PC-3 (cell line): ENCODE measurements at regions of chr12 and their contacts with region 1.

Region 1: DNA sequence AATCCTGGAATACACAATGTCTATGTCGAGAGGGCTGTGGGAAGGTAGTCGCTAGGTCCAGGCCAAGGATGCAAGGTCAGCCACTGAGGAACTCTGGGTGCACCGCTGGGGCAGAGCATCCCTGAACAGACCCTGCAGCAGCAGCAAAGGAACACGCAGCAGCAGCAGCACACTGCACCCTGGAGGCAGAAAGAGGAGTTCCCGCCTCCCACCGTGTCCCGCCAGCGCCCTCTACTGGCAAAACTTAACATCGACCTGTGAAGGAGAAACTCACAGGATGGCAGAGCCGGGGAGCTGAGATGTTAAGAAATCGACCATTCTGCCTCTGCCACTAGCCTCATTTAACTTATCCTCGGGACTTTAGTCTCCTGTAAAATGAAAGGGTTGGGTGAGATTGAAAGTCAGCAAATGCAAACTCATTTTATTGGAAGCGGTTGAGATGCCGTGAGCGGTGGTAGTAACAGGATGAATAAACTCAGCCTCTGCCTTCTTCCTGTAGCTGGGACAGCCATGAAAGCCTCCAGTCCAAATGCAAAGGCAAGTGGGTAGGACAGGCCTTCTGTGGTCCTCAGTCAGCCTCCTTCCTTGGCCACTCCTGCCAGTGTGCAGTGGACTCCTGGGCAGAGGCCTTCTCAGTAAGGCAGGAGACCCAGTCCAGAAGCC is 45.6 kb downstream of the STAB2 start:
- DNase-seq: peak; percentile 93
- ATAC-seq: peak; percentile 88
- H3K4me3 ChIP-seq: no peak overlapping the region
- H3K27ac ChIP-seq: no peak overlapping the region
- H3K4me1 ChIP-seq: peaks cover 3% of the 10 kb centered on the region; the same call in 1 of the 2 replicates
- H3K27me3 ChIP-seq: peaks cover 24% of the 10 kb centered on the region
- CTCF ChIP-seq: peak; percentile 100

Region 2: DNA sequence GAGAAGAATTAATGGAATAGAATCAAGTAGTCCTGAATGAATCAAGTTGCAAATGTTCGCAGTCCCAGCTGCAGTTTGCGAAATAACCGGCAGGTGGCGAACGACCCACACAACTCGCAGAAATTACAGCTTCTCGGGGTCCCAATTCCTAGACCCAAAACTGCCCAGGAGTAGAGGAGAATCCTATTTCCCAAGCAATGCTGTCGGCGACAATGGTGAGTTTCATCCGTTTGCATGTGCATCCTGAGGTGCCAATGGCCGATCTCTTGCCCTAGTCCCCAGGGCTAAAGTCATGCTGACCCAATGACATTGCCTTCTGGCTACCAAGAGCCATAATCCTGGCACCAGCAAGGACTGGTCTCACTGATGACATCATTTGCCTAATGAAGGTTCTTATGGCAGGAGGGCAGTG is 683.7 kb before region 1 on chr12:
- CTCF ChIA-PET with region 1: no interaction called
- POLR2A ChIA-PET with region 1: no interaction called
- intact Hi-C with region 1: loop called (anchors 5 kb)
- DNase-seq: peak; percentile 64
- ATAC-seq: no peak
- H3K4me3 ChIP-seq: no peak overlapping the region
- H3K27ac ChIP-seq: no peak overlapping the region
- H3K4me1 ChIP-seq: no peaks in the 10 kb centered on the region
- H3K27me3 ChIP-seq: peaks cover 22% of the 10 kb centered on the region
- CTCF ChIP-seq: peak; percentile 96

Region 3: GRCh38 chr12:103495479-103496456 is 136.9 kb before region 1 on chr12 and contains the start of gene C12orf42:
- CTCF ChIA-PET with region 1: interaction called, 3 read pairs
- POLR2A ChIA-PET with region 1: no interaction called
- intact Hi-C with region 1: loop called (anchors 1 kb)
- DNase-seq: peak; percentile 76
- ATAC-seq: peak; percentile 81
- H3K4me3 ChIP-seq: peak within 1 kb of the TSS; percentile 65
- H3K27ac ChIP-seq: no peak within 1 kb of the TSS
- H3K4me1 ChIP-seq: peaks cover 15% of the 10 kb centered on the region
- H3K27me3 ChIP-seq: peaks cover 29% of the 10 kb centered on the region
- CTCF ChIP-seq: peak; percentile 91
- total RNA-seq, gene C12orf42: not detected in 2 replicates

Region 4: DNA sequence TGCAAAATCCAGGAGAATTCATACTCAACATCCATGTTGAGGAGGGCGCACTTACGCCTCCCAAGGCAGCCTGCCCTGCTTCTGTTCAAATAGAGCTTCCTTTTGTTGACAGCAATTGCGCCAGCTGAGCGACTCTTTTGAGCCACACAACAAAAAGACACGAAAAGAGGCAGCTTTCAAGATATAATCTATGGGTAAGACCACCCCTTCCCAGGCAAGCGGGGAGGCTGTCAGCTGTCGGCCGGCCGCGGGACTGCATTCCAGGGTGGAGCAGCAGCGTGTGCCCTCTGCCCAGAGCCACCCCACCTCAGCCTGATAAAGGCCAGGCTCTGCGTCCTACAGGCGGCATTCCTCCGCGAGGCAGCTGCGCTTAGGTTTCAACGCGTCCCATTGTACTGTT is 61.4 kb before region 1 on chr12:
- CTCF ChIA-PET with region 1: interaction called, 5 read pairs
- POLR2A ChIA-PET with region 1: no interaction called
- intact Hi-C with region 1: loop called (anchors 1 kb)
- DNase-seq: no peak
- ATAC-seq: no peak
- H3K4me3 ChIP-seq: no peak overlapping the region
- H3K27ac ChIP-seq: no peak overlapping the region
- H3K4me1 ChIP-seq: peaks cover 5% of the 10 kb centered on the region; the same call in 1 of the 2 replicates
- H3K27me3 ChIP-seq: no peaks in the 10 kb centered on the region
- CTCF ChIP-seq: no peak

Region 5: GRCh38 chr12:103586132-103586531 is 46.6 kb before region 1 on chr12:
- CTCF ChIA-PET with region 1: interaction called, 3 read pairs
- POLR2A ChIA-PET with region 1: no interaction called
- intact Hi-C with region 1: loop called (anchors 1 kb)
- DNase-seq: peak; percentile 35
- ATAC-seq: peak; percentile 54
- H3K4me3 ChIP-seq: no peak overlapping the region
- H3K27ac ChIP-seq: no peak overlapping the region
- H3K4me1 ChIP-seq: no peaks in the 10 kb centered on the region
- H3K27me3 ChIP-seq: peaks cover 51% of the 10 kb centered on the region
- CTCF ChIP-seq: peak; percentile 44

Region 6: GRCh38 chr12:103877934-103878510 is 245.3 kb after region 1 on chr12:
- CTCF ChIA-PET with region 1: interaction called, 3 read pairs
- POLR2A ChIA-PET with region 1: no interaction called
- intact Hi-C with region 1: loop called (anchors 5 kb)
- DNase-seq: peak; percentile 94
- ATAC-seq: peak; percentile 73
- H3K4me3 ChIP-seq: 0 out of 2 replicates have a peak overlapping the region, but pooled peaks have one; percentile 25
- H3K27ac ChIP-seq: no peak overlapping the region
- H3K4me1 ChIP-seq: peaks cover 27% of the 10 kb centered on the region
- H3K27me3 ChIP-seq: no peaks in the 10 kb centered on the region
- CTCF ChIP-seq: peak; percentile 95

Region 7: DNA sequence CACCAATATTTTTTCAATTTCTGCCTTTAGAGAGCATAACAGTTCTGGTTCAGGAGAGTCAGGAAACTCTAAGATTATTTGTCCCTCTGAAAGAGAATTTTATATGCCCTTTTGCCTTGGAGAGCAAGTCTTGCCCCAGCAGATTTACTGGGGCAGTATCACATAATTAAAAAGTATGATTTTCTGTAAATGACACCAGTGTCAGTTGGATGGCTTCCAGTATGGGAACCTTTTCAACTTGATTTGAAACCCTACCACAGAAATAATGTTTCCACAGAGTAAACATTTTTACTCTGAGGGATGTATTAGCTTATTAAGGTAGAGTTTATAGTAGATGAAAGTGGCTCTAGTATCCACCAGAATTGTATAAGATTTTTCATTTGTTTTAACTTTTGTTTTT is 1368.8 kb after region 1 on chr12:
- CTCF ChIA-PET with region 1: no interaction called
- POLR2A ChIA-PET with region 1: no interaction called
- intact Hi-C with region 1: no loop called
- DNase-seq: no peak
- ATAC-seq: no peak
- H3K4me3 ChIP-seq: no peak overlapping the region
- H3K27ac ChIP-seq: no peak overlapping the region
- H3K4me1 ChIP-seq: no peaks in the 10 kb centered on the region
- H3K27me3 ChIP-seq: no peaks in the 10 kb centered on the region
- CTCF ChIP-seq: no peak